Caco-2 (cell line): ENCODE measurements at regions of chrX and their contacts with region 1.

Region 1: GRCh38 chrX:30141966-30142365 is 73.4 kb upstream of the MAGEB2 start:
- DNase-seq: peak; percentile 12 to 30
- H3K4me3 ChIP-seq: no peak overlapping the region
- H3K4me3 Mint-ChIP-seq: no peak overlapping the region
- H3K27ac Mint-ChIP-seq: no peak overlapping the region
- H3K4me1 ChIP-seq: peaks cover 10% of the 10 kb centered on the region; the same call in 1 of the 2 replicates
- H3K4me1 Mint-ChIP-seq: peaks cover 7% of the 10 kb centered on the region
- H3K27me3 ChIP-seq: no peaks in the 10 kb centered on the region
- H3K27me3 Mint-ChIP-seq: no peaks in the 10 kb centered on the region
- CTCF ChIP-seq: peak in 1 of 2 experiments; percentile 29

Region 2: GRCh38 chrX:30181353-30181752 is 39.4 kb after region 1 on chrX:
- CTCF ChIA-PET with region 1: no interaction called
- POLR2A ChIA-PET with region 1: no interaction called
- intact Hi-C with region 1: loop called (anchors 1 kb)
- DNase-seq: no peak
- H3K4me3 ChIP-seq: no peak overlapping the region
- H3K4me3 Mint-ChIP-seq: no peak overlapping the region
- H3K27ac Mint-ChIP-seq: no peak overlapping the region
- H3K4me1 ChIP-seq: no peaks in the 10 kb centered on the region
- H3K4me1 Mint-ChIP-seq: no peaks in the 10 kb centered on the region
- H3K27me3 ChIP-seq: no peaks in the 10 kb centered on the region
- H3K27me3 Mint-ChIP-seq: peaks cover 14% of the 10 kb centered on the region
- CTCF ChIP-seq: no peak

Region 3: DNA sequence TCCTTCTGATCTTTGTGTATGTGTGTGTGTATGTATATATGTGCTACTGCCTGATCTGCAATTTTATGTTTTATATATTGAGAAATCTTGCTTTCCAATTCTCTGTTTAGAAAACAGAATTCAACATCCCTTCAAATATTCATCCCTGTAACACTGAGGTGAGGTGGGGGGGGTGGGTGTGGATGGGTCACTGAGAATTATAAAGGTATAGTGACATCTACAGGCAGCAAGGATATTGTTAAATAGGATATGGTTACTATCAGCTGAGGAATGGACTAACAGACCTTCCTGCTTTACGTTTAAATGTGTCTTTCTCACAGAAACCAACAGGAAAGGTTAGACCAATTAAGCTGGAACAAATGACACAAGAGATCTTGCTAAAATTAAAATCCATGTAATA is 54.4 kb after region 1 on chrX:
- CTCF ChIA-PET with region 1: no interaction called
- POLR2A ChIA-PET with region 1: no interaction called
- intact Hi-C with region 1: loop called (anchors 1 kb)
- DNase-seq: no peak
- H3K4me3 ChIP-seq: no peak overlapping the region
- H3K4me3 Mint-ChIP-seq: no peak overlapping the region
- H3K27ac Mint-ChIP-seq: no peak overlapping the region
- H3K4me1 ChIP-seq: no peaks in the 10 kb centered on the region
- H3K4me1 Mint-ChIP-seq: no peaks in the 10 kb centered on the region
- H3K27me3 ChIP-seq: no peaks in the 10 kb centered on the region
- H3K27me3 Mint-ChIP-seq: no peaks in the 10 kb centered on the region
- CTCF ChIP-seq: peak in 1 of 2 experiments; percentile 24

Region 4: DNA sequence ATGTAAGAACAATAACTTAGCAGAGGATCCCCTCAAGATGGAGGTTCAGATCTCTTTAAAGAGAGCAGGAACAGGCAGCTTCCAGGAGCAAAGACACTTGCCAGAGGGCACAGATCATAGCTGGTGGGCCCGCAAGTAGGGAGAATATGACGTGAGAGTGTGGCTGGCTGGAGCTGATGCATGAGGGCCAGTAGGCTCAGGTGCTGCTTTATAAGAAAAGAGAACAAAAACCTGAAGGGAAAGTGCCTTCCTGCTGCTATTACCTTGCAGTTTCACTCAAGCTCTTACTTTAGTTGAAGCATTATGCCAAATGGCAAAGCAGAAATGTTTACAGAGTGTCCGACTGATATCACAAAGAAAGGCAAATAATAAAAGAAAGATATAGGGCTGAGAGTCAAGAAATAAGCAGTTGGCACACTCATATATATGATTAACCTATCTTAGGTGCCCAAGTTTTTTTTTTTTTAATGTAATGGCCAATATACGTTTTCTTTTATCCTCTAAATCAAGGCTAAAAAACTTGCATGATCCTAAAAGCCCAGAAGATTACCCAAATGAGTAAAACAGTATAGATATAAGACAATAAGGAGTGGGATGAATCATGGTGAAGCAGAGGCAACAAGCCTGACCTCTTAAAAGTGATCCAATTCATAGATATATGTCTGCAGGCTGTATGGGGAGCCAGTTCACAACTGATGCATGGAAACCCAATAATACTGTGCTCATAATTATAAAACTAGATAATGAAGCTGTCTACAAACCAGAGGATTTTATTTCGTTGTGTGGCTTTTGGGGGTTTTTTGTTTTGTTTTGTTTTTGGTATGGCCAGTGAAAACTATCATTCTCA is 154.7 kb after region 1 on chrX:
- CTCF ChIA-PET with region 1: no interaction called
- POLR2A ChIA-PET with region 1: no interaction called
- intact Hi-C with region 1: no loop called
- DNase-seq: no peak
- H3K4me3 ChIP-seq: no peak overlapping the region
- H3K4me3 Mint-ChIP-seq: no peak overlapping the region
- H3K27ac Mint-ChIP-seq: no peak overlapping the region
- H3K4me1 ChIP-seq: no peaks in the 10 kb centered on the region
- H3K4me1 Mint-ChIP-seq: no peaks in the 10 kb centered on the region
- H3K27me3 ChIP-seq: no peaks in the 10 kb centered on the region
- H3K27me3 Mint-ChIP-seq: peaks cover 3% of the 10 kb centered on the region
- CTCF ChIP-seq: no peak